ENCODE measurements at regions of chr11 and their contacts with region 1.

Region 1: DNA sequence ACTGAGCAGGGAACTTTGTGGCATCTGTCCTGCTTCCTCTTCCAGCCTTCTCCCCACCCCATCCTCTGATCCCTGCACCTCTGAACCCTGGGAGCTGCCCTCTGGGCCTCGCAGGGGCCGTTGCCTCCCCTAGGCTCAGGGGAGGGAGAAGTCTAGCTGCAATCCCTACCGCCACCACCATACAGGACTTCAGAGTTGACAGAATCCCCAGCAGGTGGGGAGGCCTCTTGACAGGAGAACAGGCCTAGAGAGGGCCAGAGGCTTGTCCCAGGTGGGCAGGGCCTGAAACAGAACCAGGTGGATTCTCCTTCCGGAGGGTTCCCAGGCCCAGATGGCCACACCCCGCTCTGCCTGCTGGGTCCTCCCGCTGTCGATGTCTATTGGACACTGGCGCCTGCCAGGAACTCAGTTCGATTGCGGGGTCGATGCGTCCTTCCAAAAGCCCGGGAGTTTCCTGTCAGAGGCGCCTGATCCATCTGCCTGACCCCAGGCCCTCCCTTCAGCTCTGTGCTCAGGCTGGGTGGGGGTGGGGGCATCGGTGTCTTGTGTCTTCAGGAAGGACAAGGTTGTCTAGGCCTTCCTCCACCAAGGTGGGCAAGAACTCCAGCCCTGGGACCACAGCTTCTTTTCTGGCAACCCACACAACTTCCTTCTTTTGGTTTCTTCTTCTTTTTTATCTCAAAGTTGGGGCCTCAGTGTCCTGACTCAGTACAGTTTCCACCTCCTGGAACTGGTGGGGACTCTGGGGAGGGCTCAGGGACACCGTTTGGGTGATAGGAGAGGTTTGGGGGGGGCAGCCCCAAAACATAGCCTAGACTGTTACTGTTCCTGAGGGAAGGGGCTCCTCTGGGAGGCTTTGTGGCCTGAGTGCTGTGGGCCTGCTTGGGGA is 6.4 kb downstream of the STARD10 start:
- DNase-seq: peak; percentile 49 to 74 (median 60)
- ATAC-seq: peak; percentile 74
- H3K4me3 ChIP-seq: no peak overlapping the region
- H3K27ac ChIP-seq: peak overlapping the region; percentile 41 to 74 (median 52)
- H3K4me1 ChIP-seq: peaks cover 26% of the 10 kb centered on the region
- H3K27me3 ChIP-seq: no peaks in the 10 kb centered on the region
- CTCF ChIP-seq: peak in 4 of 7 experiments; percentile 29 to 43 (median 34)
- POLR2A ChIP-seq: peak; percentile 6 to 36 (median 20)

Region 2: GRCh38 chr11:72724851-72725730 is 62.4 kb before region 1 on chr11:
- intact Hi-C with region 1: loop called (anchors 5 kb)
- DNase-seq: peak; percentile 80 to 84 (median 82)
- ATAC-seq: peak; percentile 22
- H3K4me3 ChIP-seq: no peak overlapping the region
- H3K27ac ChIP-seq: peak overlapping the region in 2 of 4 donors; percentile 29 to 31
- H3K4me1 ChIP-seq: peaks cover 34% of the 10 kb centered on the region
- H3K27me3 ChIP-seq: no peaks in the 10 kb centered on the region
- CTCF ChIP-seq: peak; percentile 72 to 99 (median 93)
- POLR2A ChIP-seq: no peak

Measured in body of pancreas (tissue), 4 donors.